Activated B cell treated with CpG ODN at 0.5 μM for 24 hours (primary cell): ENCODE measurements at regions of chr15 and their contacts with region 1.

Region 1: GRCh38 chr15:92917606-92918407 is 17.7 kb downstream of the CHD2 start:
- DNase-seq: peak; percentile 78
- ATAC-seq: peak; percentile 51
- H3K4me3 Mint-ChIP-seq: peak overlapping the region; percentile 41
- H3K27ac Mint-ChIP-seq: peak overlapping the region; percentile 86
- H3K4me1 Mint-ChIP-seq: peaks cover 84% of the 10 kb centered on the region
- H3K27me3 Mint-ChIP-seq: no peaks in the 10 kb centered on the region
- CTCF ChIP-seq: peak; percentile 50

Region 2: GRCh38 chr15:92714477-92715401 is 203.1 kb before region 1 on chr15:
- CTCF ChIA-PET with region 1: interaction called, 3 read pairs
- POLR2A ChIA-PET with region 1: no interaction called
- intact Hi-C with region 1: loop called (anchors 5 kb)
- DNase-seq: peak; percentile 51
- ATAC-seq: peak; percentile 82
- H3K4me3 Mint-ChIP-seq: peak overlapping the region; percentile 68
- H3K27ac Mint-ChIP-seq: no peak overlapping the region
- H3K4me1 Mint-ChIP-seq: peaks cover 7% of the 10 kb centered on the region
- H3K27me3 Mint-ChIP-seq: peaks cover 39% of the 10 kb centered on the region
- CTCF ChIP-seq: no peak

Region 3: GRCh38 chr15:92808978-92809879 is 108.6 kb before region 1 on chr15:
- CTCF ChIA-PET with region 1: interaction called, 63 read pairs
- POLR2A ChIA-PET with region 1: interaction called, 122 read pairs
- intact Hi-C with region 1: loop called (anchors 1 kb)
- DNase-seq: peak; percentile 99
- ATAC-seq: peak; percentile 83
- H3K4me3 Mint-ChIP-seq: peak overlapping the region; percentile 91
- H3K27ac Mint-ChIP-seq: peak overlapping the region; percentile 98
- H3K4me1 Mint-ChIP-seq: peaks cover 37% of the 10 kb centered on the region
- H3K27me3 Mint-ChIP-seq: no peaks in the 10 kb centered on the region
- CTCF ChIP-seq: peak; percentile 81

Region 4: DNA sequence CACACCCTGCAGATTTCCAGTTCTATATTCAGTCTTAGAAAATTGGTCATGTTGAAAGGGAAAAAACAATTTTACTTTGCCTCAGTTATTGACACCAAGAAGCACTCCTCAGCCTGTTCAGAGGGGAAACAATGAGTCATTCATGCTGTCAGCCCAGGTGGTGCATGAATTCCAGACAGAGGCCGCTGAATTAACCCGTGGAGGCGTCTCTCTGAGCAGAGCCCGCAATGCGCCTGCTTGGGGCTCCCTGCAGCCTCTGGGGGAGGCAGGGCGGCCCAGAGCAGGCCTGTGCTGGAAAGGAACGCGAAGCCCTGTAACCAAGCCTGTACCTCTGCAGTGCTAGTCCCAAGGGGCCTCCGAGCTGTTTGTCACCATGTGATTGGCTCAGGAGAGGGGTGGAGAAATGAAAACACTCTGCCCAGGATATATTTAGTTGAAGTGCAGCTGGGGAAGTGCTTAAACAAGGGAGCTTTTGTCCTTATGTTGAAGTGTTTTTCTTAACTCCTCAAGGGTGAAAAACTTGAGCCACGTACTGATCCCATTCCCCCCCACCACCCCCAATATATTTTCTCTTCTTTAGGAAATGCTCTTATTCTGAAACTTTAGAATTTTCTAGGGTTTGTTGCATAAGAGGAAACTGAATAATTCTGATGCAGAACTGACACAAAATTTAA is 86.0 kb before region 1 on chr15:
- CTCF ChIA-PET with region 1: interaction called, 5 read pairs
- POLR2A ChIA-PET with region 1: interaction called, 14 read pairs
- intact Hi-C with region 1: loop called (anchors 1 kb)
- DNase-seq: peak; percentile 86
- ATAC-seq: peak; percentile 93
- H3K4me3 Mint-ChIP-seq: peak overlapping the region; percentile 80
- H3K27ac Mint-ChIP-seq: peak overlapping the region; percentile 96
- H3K4me1 Mint-ChIP-seq: peaks cover 58% of the 10 kb centered on the region
- H3K27me3 Mint-ChIP-seq: no peaks in the 10 kb centered on the region
- CTCF ChIP-seq: no peak

Region 5: GRCh38 chr15:92881802-92882696 is 35.8 kb before region 1 on chr15:
- CTCF ChIA-PET with region 1: interaction called, 15 read pairs
- POLR2A ChIA-PET with region 1: interaction called, 63 read pairs
- intact Hi-C with region 1: loop called (anchors 1 kb)
- DNase-seq: peak; percentile 91
- ATAC-seq: peak; percentile 90
- H3K4me3 Mint-ChIP-seq: peak overlapping the region; percentile 88
- H3K27ac Mint-ChIP-seq: peak overlapping the region; percentile 99
- H3K4me1 Mint-ChIP-seq: peaks cover 46% of the 10 kb centered on the region
- H3K27me3 Mint-ChIP-seq: no peaks in the 10 kb centered on the region
- CTCF ChIP-seq: no peak

Region 6: GRCh38 chr15:92930776-92931175 is 13.0 kb after region 1 on chr15:
- CTCF ChIA-PET with region 1: no interaction called
- POLR2A ChIA-PET with region 1: no interaction called
- intact Hi-C with region 1: loop called (anchors 1 kb)
- DNase-seq: no peak
- ATAC-seq: no peak
- H3K4me3 Mint-ChIP-seq: no peak overlapping the region
- H3K27ac Mint-ChIP-seq: peak overlapping the region; percentile 18
- H3K4me1 Mint-ChIP-seq: peaks cover 5% of the 10 kb centered on the region
- H3K27me3 Mint-ChIP-seq: no peaks in the 10 kb centered on the region
- CTCF ChIP-seq: no peak

Region 7: GRCh38 chr15:92958105-92958504 is 40.3 kb after region 1 on chr15:
- CTCF ChIA-PET with region 1: no interaction called
- POLR2A ChIA-PET with region 1: no interaction called
- intact Hi-C with region 1: loop called (anchors 5 kb)
- DNase-seq: no peak
- ATAC-seq: peak; percentile 25
- H3K4me3 Mint-ChIP-seq: no peak overlapping the region
- H3K27ac Mint-ChIP-seq: peak overlapping the region; percentile 36
- H3K4me1 Mint-ChIP-seq: peaks cover 10% of the 10 kb centered on the region
- H3K27me3 Mint-ChIP-seq: no peaks in the 10 kb centered on the region
- CTCF ChIP-seq: no peak